H1 (cell line): ENCODE measurements at regions of chr16 and their contacts with region 1.

Region 1: GRCh38 chr16:23678430-23679273 is at the start of gene PLK1:
- DNase-seq: peak; percentile 74 to 92
- H3K4me3 ChIP-seq: peak within 1 kb of the TSS; percentile 96 to 99 (median 98)
- H3K27ac ChIP-seq: peak within 1 kb of the TSS; percentile 77
- H3K4me1 ChIP-seq: peaks cover 2 to 8% (median 7%) of the 10 kb centered on the region in 4 experiments; a peak in 4 of 7 replicates
- H3K27me3 ChIP-seq: no peaks in the 10 kb centered on the region
- CTCF ChIP-seq: peak; percentile 18 to 49 (median 47)
- EP300 ChIP-seq: no peak
- POLR2A ChIP-seq: peak; percentile 72 to 73
- RAD21 ChIP-seq: peak; percentile 37 to 53; a peak in 3 of 4 replicates
- total RNA-seq, gene PLK1: 135 and 139 TPM in 2 replicates

Region 2: GRCh38 chr16:23640931-23641765 is 37.5 kb before region 1 on chr16 and contains the starts of genes DCTN5 and PALB2:
- CTCF ChIA-PET with region 1: interaction called, 3 read pairs
- POLR2A ChIA-PET with region 1: interaction called, 32 read pairs
- DNase-seq: peak; percentile 75 to 88
- H3K4me3 ChIP-seq: peak within 1 kb of the TSS; percentile 83 to 99 (median 96)
- H3K27ac ChIP-seq: peak within 1 kb of the TSS; percentile 85
- H3K4me1 ChIP-seq: peaks cover 0 to 9% (median 1%) of the 10 kb centered on the region in 4 experiments; a peak in 3 of 7 replicates
- H3K27me3 ChIP-seq: no peaks in the 10 kb centered on the region
- CTCF ChIP-seq: peak in 1 of 3 experiments; percentile 10; a peak in 1 of 4 replicates
- EP300 ChIP-seq: no peak; a peak in 1 of 3 replicates
- POLR2A ChIP-seq: peak; percentile 73 to 86
- RAD21 ChIP-seq: no peak
- total RNA-seq, gene DCTN5: 74.0 and 75.6 TPM in 2 replicates
- total RNA-seq, gene PALB2: 28.6 and 33.1 TPM in 2 replicates

Region 3: DNA sequence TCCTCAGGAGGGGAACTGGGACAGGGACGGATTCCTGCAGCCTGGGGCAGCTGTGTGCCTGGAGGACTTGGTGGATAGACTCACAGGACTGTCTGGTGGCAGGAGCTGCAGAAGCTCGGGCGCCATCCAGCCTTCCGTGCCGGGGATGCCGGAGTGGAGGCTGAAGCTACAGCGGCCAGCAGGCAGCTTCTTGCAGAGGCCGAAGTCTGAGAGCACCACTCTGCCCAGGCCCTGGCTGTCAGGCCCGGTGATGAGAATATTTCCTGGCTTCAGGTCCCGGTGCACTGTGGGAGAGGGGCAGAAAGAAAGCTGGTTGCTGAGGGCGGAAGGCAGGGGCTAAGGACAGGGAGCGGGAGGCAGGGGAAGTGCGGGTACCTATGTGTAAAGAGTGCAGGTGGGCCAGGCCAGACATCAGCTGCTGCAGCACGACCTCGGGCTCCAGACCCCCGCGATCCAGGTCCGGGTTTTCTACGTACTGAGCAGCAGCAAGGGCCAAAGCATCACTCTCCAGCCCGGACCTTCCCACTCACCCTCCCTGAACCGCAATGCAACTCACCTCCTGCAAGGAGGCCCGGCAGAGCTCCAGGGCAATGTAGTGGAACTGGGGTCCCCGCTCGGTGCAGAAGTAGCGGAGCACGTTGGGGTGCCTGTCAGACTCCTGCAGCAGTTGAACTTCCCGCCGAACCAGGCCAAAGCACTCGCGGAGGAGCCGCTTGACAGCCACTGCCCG is 16.2 kb after region 1 on chr16:
- CTCF ChIA-PET with region 1: interaction called, 43 read pairs
- POLR2A ChIA-PET with region 1: interaction called, 230 read pairs
- DNase-seq: peak; percentile 79 to 86
- H3K4me3 ChIP-seq: peak overlapping the region; percentile 15 to 59 (median 51); a peak in 7 of 8 replicates
- H3K27ac ChIP-seq: no peak overlapping the region
- H3K4me1 ChIP-seq: peaks cover 0 to 5% (median 4%) of the 10 kb centered on the region in 4 experiments; a peak in 5 of 7 replicates
- H3K27me3 ChIP-seq: no peaks in the 10 kb centered on the region
- CTCF ChIP-seq: no peak
- EP300 ChIP-seq: peak in 1 of 2 experiments; percentile 70; a peak in 1 of 3 replicates
- POLR2A ChIP-seq: no peak
- RAD21 ChIP-seq: peak in 1 of 2 experiments; percentile 20; a peak in 2 of 4 replicates